ENCODE measurements at regions of chr5 and their contacts with region 1.

Region 1: DNA sequence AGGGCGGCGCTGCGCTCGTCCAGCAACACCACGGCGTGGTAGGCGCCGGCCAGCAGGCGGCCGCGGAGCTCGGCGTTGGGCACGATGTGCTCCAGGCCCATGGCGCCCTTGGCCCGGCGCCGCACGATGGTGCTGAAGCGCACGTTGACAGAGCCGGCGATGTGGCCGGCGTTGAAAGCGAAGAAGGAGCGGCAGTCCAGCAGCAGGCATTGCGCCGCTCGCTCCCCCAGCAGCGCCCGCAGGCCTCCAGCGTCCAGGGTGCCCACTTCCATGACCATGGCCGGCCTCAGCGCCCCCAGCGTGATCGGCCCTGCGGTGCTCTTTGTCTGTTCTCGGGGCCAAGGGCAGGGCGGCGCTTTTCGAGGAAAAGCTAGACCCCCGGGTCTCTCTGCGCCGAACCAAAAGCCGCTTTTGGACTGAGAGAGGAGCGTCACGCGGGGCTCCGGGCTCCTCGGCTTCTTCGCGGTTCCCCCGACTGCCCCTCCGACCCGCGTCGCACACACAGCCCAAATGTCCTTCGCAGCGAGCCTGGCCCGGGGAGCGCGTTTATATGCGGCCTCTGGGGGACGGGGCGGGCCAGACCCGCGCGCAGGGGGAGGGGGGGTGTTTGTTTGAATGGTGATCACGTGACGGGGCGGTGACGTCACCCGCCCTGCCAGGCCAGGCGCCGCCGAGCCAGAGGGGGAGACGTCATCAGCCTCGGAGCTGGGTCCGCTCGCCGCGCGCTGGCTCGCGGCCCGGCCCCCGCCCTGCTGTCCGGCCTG is at the start of gene DUSP1:
- DNase-seq: peak; percentile 83 to 96
- H3K4me3 ChIP-seq: peak within 1 kb of the TSS; percentile 53 to 83 (median 80)
- H3K27ac ChIP-seq: peak within 1 kb of the TSS; percentile 90
- H3K4me1 ChIP-seq: peaks cover 3 to 18% (median 5%) of the 10 kb centered on the region in 4 experiments; a peak in 6 of 7 replicates
- H3K27me3 ChIP-seq: peaks cover 0 to 23% (median 15%) of the 10 kb centered on the region in 4 experiments; a peak in 6 of 7 replicates
- CTCF ChIP-seq: peak in 2 of 3 experiments; percentile 58 to 82; a peak in 3 of 4 replicates
- EP300 ChIP-seq: no peak; a peak in 1 of 3 replicates
- POLR2A ChIP-seq: peak in 1 of 2 experiments; percentile 98; a peak in 2 of 3 replicates
- RAD21 ChIP-seq: peak; percentile 27 to 54; a peak in 3 of 4 replicates
- total RNA-seq, gene DUSP1: 6.5 and 8.6 TPM in 2 replicates

Region 2: DNA sequence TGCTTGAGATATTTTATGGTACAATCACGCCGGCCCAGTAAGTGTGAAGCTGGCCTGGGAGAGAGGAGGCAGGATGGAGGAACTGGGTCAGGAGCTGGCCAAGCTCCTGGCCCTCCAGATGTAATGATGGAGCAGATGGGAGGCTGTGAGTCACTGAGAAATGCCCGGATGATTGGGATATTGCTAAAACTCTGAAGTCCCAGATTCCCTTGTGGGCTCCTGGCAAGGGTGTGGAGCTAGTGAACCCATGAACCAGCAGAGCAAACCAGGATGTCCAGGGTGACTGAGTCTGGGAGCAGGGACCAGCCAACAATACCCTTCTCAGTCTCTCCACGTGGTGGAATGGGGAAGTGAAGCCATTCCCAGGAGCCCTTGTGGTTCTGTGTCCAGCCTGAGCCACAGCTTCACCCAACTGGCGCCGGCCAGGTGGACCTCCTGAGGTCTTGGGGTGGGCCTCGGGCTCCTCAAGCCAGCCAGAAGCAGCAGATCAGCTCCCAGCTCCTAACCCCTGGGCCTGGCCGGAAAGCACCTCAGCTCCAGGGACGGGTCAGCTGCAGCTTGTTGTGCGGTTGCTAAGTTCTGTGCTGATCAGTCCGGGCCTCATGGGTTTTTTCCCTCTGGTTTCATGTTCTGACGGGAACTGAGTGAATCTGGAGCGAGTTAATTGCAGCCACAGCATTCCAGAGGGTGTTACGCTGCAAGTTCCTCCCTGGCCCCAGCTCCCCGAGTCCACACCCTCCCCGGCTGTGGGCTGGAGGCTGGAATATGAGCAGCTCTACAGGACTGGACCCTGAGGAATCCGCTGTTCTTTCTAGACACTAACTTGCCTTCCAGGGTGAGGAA is 37.5 kb before region 1 on chr5:
- CTCF ChIA-PET with region 1: interaction called, 10 read pairs
- POLR2A ChIA-PET with region 1: interaction called, 14 read pairs
- DNase-seq: no peak
- H3K4me3 ChIP-seq: no peak overlapping the region
- H3K27ac ChIP-seq: no peak overlapping the region
- H3K4me1 ChIP-seq: no peaks in the 10 kb centered on the region; a peak in 1 of 7 replicates
- H3K27me3 ChIP-seq: peaks cover 0 to 2% (median 0%) of the 10 kb centered on the region in 4 experiments; a peak in 1 of 7 replicates
- CTCF ChIP-seq: no peak
- EP300 ChIP-seq: no peak
- POLR2A ChIP-seq: no peak
- RAD21 ChIP-seq: no peak

Region 3: DNA sequence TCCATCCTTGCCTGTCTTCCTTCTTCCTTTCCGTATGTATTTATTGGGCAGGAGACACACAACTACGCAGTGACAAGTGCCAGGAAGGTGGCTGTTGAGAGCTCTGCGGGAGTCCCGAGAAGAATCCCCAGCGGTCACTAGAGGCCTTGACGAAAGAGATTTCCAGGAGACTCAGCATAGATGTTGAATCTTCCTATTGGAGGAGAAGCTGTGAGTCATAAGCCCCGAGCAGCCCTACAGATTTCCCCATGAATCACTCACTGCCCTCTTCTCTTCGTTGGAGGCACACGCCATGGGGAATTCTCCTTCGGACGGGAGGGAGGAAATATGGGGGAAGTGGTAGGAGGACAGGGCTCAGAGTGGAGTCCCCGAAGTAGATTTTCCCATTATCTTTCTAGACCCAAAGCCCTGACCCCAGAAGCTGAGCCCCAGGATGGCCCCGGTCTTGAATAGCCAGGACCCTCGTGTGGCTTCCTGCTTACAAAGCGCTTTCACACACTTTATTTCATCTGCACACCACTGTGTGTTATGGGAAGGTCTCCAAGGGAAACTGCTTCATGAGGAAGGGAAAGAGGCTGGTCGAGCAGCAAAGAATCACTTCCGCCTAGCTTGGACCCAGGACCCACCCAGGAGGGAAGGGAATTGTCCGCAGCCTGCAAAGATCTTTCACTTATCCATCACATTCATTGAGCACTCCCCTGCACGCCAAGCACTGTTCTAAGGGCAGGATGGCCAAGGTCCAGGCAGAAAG is 12.6 kb before region 1 on chr5:
- CTCF ChIA-PET with region 1: interaction called, 7 read pairs
- POLR2A ChIA-PET with region 1: interaction called, 45 read pairs
- DNase-seq: no peak
- H3K4me3 ChIP-seq: no peak overlapping the region
- H3K27ac ChIP-seq: no peak overlapping the region
- H3K4me1 ChIP-seq: peaks cover 0 to 6% (median 1%) of the 10 kb centered on the region in 4 experiments; a peak in 1 of 7 replicates
- H3K27me3 ChIP-seq: peaks cover 0 to 7% (median 0%) of the 10 kb centered on the region in 4 experiments; a peak in 2 of 7 replicates
- CTCF ChIP-seq: no peak
- EP300 ChIP-seq: no peak
- POLR2A ChIP-seq: no peak
- RAD21 ChIP-seq: no peak

Region 4: GRCh38 chr5:172788771-172789686 is 18.2 kb after region 1 on chr5:
- CTCF ChIA-PET with region 1: interaction called, 12 read pairs
- POLR2A ChIA-PET with region 1: interaction called, 36 read pairs
- DNase-seq: no peak
- H3K4me3 ChIP-seq: no peak overlapping the region
- H3K27ac ChIP-seq: no peak overlapping the region
- H3K4me1 ChIP-seq: peaks cover 0 to 3% (median 0%) of the 10 kb centered on the region in 4 experiments; a peak in 4 of 7 replicates
- H3K27me3 ChIP-seq: peaks cover 0 to 2% (median 0%) of the 10 kb centered on the region in 4 experiments; a peak in 3 of 7 replicates
- CTCF ChIP-seq: no peak
- EP300 ChIP-seq: no peak
- POLR2A ChIP-seq: no peak
- RAD21 ChIP-seq: no peak

Region 5: DNA sequence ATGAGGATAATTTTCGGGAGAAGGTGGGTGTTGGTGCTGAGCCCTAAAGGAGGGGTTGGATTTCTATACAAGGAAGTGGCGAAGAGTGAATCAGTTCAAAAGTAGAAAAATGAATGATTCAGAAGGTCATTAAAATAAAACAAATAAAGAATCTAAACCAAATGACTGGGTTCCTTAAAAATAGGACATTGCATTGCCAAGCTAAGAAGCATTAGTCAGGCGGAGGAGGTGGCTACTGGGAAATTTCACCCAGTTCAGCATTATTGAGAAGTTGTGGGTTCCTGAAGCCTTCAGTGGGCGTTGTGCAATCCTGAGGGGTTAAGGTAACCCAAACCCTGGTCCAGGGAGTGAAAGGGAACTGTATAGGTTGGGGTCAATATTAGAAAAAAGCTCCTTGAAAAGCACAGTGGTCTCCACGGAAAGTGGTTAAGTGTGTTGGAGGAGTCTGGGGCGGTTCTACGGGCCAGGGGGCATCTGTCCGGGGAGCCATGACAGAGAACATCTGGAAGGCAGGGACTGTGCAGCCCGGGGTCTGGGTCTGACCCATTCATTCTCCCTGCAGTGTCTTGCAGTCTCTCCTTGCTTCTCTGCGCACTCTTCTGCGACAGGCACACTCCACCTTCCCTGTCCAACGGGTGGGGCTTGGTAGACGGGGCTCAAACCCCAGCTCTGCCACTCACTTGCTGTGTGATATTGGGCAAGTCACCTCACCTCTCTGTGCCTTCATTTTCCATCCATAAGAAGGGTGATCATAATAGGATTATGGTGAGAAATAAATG is 27.8 kb after region 1 on chr5:
- CTCF ChIA-PET with region 1: interaction called, 3 read pairs
- POLR2A ChIA-PET with region 1: interaction called, 12 read pairs
- DNase-seq: no peak
- H3K4me3 ChIP-seq: no peak overlapping the region
- H3K27ac ChIP-seq: no peak overlapping the region
- H3K4me1 ChIP-seq: no peaks in the 10 kb centered on the region
- H3K27me3 ChIP-seq: no peaks in the 10 kb centered on the region; a peak in 1 of 7 replicates
- CTCF ChIP-seq: no peak
- EP300 ChIP-seq: no peak
- POLR2A ChIP-seq: no peak
- RAD21 ChIP-seq: no peak

Region 6: DNA sequence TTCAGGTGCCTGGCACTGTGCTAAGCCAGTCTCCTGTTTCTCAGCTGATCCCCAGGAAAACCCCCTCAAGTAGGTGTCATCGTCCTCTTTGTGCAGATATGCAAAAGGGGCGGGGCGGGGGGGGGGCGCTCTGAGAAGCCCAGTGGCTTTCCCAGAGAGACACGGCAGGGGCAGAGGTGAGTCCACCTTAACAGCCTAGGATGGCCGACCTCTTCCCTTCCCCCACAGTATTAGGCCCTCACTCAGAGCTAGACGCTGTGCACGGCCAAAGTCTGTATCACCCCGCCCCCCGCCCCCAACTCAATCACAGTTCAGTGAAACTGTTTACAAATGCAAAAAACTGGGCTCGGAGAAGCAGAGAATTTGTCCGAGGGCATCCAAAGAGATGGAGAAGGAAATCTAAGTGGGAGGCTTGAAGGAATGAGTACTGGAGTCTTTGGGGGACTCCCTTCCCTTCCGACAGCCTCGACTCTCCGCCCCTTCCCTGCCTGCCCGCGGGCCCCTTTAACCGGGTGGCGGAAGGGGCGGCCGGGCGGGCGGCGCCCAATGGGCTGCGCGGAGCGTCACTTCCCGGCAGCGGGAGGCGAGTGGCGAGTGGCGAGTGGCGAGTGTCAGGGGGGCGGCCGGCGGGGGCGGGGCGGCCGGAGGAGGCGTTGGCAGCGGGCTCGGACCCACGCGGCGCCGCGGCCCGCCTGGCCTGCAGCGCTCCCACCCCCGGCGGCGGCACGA is 63.0 kb after region 1 on chr5 and contains the start of gene ERGIC1:
- CTCF ChIA-PET with region 1: interaction called, 9 read pairs
- POLR2A ChIA-PET with region 1: interaction called, 42 read pairs
- DNase-seq: peak in 1 of 2 experiments; percentile 86
- H3K4me3 ChIP-seq: peak within 1 kb of the TSS; percentile 63 to 75 (median 69)
- H3K27ac ChIP-seq: peak within 1 kb of the TSS; percentile 73
- H3K4me1 ChIP-seq: peaks cover 4 to 13% (median 9%) of the 10 kb centered on the region in 4 experiments
- H3K27me3 ChIP-seq: no peaks in the 10 kb centered on the region
- CTCF ChIP-seq: no peak
- EP300 ChIP-seq: no peak
- POLR2A ChIP-seq: peak; percentile 70 to 74
- RAD21 ChIP-seq: no peak
- total RNA-seq, gene ERGIC1: 95.3 and 96.1 TPM in 2 replicates